ENCODE measurements at regions of chr2 and their contacts with region 1.

Region 1: DNA sequence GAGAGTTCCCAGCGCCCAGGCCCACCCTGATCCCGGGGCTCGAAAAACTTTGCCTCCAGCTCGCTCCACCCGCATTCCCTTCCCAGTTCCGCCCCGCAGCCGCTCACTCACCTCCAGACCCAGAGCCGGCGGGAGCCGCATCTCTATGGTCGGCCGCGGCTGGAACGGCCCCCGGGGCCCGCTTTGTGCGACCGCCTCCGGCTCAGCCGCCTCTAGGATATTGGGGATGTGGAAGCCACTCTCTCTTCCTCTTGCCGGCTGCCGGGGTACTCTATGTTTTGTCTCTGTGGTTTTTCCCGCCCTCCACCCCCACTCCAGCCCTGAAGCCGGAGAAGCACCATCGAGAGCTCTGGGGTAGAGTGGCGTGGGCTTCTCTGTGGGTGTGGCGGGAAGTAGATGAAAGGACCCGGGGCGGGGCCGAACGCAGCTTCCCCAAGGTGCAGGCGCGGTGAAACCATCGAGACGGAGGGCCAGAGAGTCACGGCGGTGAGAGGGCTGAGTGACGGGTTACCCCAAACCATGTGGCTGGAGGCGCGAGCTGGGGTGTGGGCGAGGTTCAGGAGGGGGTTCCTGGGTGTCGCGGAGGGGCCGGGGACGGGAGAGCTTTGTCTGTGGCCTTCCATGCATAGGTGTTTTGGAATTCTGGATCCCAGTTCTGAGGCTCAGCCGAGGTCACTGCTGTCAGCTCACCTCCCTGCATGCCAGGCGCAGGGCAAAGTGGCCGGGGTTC is at the starts of genes BCS1L and ZNF142:
- DNase-seq: peak; percentile 96
- ATAC-seq: peak; percentile 96
- total RNA-seq, gene BCS1L: 47.6 TPM
- total RNA-seq, gene ZNF142: 20.5 TPM

Region 2: GRCh38 chr2:218568190-218569037 is 91.0 kb before region 1 on chr2 and contains the starts of genes CNOT9 and USP37:
- intact Hi-C with region 1: loop called (anchors 10 kb)
- DNase-seq: peak; percentile 100
- ATAC-seq: peak; percentile 98
- total RNA-seq, gene CNOT9: 17.7 TPM
- total RNA-seq, gene USP37: 5.9 TPM

Region 3: GRCh38 chr2:219041252-219041651 is 381.8 kb after region 1 on chr2 and contains the start of gene CFAP65:
- intact Hi-C with region 1: no loop called
- DNase-seq: no peak
- ATAC-seq: no peak
- total RNA-seq, gene CFAP65: not detected